Heart left ventricle (tissue), 16 donors: ENCODE measurements at regions of chr15 and their contacts with region 1.

Region 1: GRCh38 chr15:30859091-30859874 is 44.4 kb upstream of the FAN1 start:
- DNase-seq: no peak
- ATAC-seq: no peak
- H3K4me3 ChIP-seq: no peak overlapping the region
- H3K27ac ChIP-seq: no peak overlapping the region
- H3K4me1 ChIP-seq: no peaks in the 10 kb centered on the region
- H3K27me3 ChIP-seq: no peaks in the 10 kb centered on the region
- CTCF ChIP-seq: peak; percentile 33 to 64 (median 52)
- POLR2A ChIP-seq: no peak

Region 2: GRCh38 chr15:30670056-30670455 is 189.2 kb before region 1 on chr15:
- intact Hi-C with region 1: loop called in 1 of 10 experiments (anchors 10 kb)
- DNase-seq: no peak
- ATAC-seq: no peak
- H3K4me3 ChIP-seq: no peak overlapping the region
- H3K27ac ChIP-seq: no peak overlapping the region
- H3K4me1 ChIP-seq: peaks cover 0 to 5% (median 0%) of the 10 kb centered on the region in 12 donors
- H3K27me3 ChIP-seq: no peaks in the 10 kb centered on the region
- CTCF ChIP-seq: no peak
- POLR2A ChIP-seq: no peak